Caco-2 (cell line): ENCODE measurements at regions of chr9 and their contacts with region 1.

Region 1: GRCh38 chr9:33737811-33738606 is 57.4 kb upstream of the PRSS3 start:
- DNase-seq: peak; percentile 68 to 72
- H3K4me3 ChIP-seq: no peak overlapping the region
- H3K4me3 Mint-ChIP-seq: no peak overlapping the region
- H3K27ac Mint-ChIP-seq: no peak overlapping the region
- H3K4me1 ChIP-seq: no peaks in the 10 kb centered on the region
- H3K4me1 Mint-ChIP-seq: peaks cover 13% of the 10 kb centered on the region
- H3K27me3 ChIP-seq: no peaks in the 10 kb centered on the region
- H3K27me3 Mint-ChIP-seq: no peaks in the 10 kb centered on the region
- CTCF ChIP-seq: peak; percentile 75 to 84

Region 2: GRCh38 chr9:33623658-33624586 is 114.1 kb before region 1 on chr9:
- CTCF ChIA-PET with region 1: interaction called, 10 read pairs
- POLR2A ChIA-PET with region 1: no interaction called
- intact Hi-C with region 1: no loop called
- DNase-seq: peak; percentile 71 to 84
- H3K4me3 ChIP-seq: no peak overlapping the region
- H3K4me3 Mint-ChIP-seq: no peak overlapping the region
- H3K27ac Mint-ChIP-seq: no peak overlapping the region
- H3K4me1 ChIP-seq: no peaks in the 10 kb centered on the region
- H3K4me1 Mint-ChIP-seq: peaks cover 13% of the 10 kb centered on the region
- H3K27me3 ChIP-seq: no peaks in the 10 kb centered on the region; the same call in 1 of the 2 replicates
- H3K27me3 Mint-ChIP-seq: peaks cover 8% of the 10 kb centered on the region
- CTCF ChIP-seq: peak; percentile 82 to 89

Region 3: GRCh38 chr9:33750307-33750838 is 12.4 kb after region 1 on chr9:
- CTCF ChIA-PET with region 1: interaction called, 13 read pairs
- POLR2A ChIA-PET with region 1: no interaction called
- intact Hi-C with region 1: loop called (anchors 1 kb)
- DNase-seq: peak; percentile 17 to 42
- H3K4me3 ChIP-seq: peak overlapping the region; percentile 91
- H3K4me3 Mint-ChIP-seq: peak overlapping the region; percentile 74
- H3K27ac Mint-ChIP-seq: peak overlapping the region; percentile 53
- H3K4me1 ChIP-seq: peaks cover 7% of the 10 kb centered on the region; the same call in 1 of the 2 replicates
- H3K4me1 Mint-ChIP-seq: peaks cover 17% of the 10 kb centered on the region
- H3K27me3 ChIP-seq: no peaks in the 10 kb centered on the region
- H3K27me3 Mint-ChIP-seq: no peaks in the 10 kb centered on the region
- CTCF ChIP-seq: no peak

Region 4: GRCh38 chr9:33778700-33779351 is 40.8 kb after region 1 on chr9:
- CTCF ChIA-PET with region 1: interaction called, 56 read pairs
- POLR2A ChIA-PET with region 1: no interaction called
- intact Hi-C with region 1: loop called (anchors 1 kb)
- DNase-seq: peak; percentile 63 to 73
- H3K4me3 ChIP-seq: no peak overlapping the region
- H3K4me3 Mint-ChIP-seq: no peak overlapping the region
- H3K27ac Mint-ChIP-seq: no peak overlapping the region
- H3K4me1 ChIP-seq: no peaks in the 10 kb centered on the region
- H3K4me1 Mint-ChIP-seq: peaks cover 7% of the 10 kb centered on the region
- H3K27me3 ChIP-seq: no peaks in the 10 kb centered on the region
- H3K27me3 Mint-ChIP-seq: no peaks in the 10 kb centered on the region
- CTCF ChIP-seq: peak; percentile 85 to 86

Region 5: DNA sequence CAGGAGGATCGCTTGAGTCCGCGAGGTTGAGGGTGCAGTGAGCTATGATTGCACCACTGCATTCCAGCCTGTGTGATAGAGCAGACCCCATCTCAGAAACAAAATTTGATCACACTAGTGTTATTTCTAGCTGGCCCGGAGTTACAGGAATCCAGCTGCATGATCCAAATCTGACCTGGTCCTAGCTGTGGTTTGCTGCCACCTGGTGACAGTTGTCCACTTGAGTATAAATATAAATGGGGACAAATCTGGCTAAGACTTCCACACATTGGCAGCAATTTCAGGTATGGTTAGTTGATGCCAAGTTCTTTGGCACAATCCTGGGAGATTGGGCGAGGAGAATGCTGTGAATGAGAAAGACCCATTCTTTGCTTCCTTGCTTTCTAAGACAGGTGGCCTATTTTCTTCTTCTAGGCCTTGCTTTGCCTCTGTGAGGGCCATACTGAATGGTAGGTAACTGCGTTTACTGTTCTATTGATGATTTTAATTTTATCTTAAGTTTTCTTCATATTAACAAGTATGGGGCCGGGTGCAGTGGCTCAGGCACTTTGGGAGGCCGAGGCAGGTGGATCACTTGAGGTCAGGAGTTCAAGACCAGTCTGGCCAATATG is 114.3 kb after region 1 on chr9:
- CTCF ChIA-PET with region 1: interaction called, 11 read pairs
- POLR2A ChIA-PET with region 1: no interaction called
- intact Hi-C with region 1: loop called (anchors 1 kb)
- DNase-seq: peak; percentile 65 to 73
- H3K4me3 ChIP-seq: no peak overlapping the region
- H3K4me3 Mint-ChIP-seq: no peak overlapping the region
- H3K27ac Mint-ChIP-seq: no peak overlapping the region
- H3K4me1 ChIP-seq: peaks cover 2% of the 10 kb centered on the region; the same call in 1 of the 2 replicates
- H3K4me1 Mint-ChIP-seq: peaks cover 23% of the 10 kb centered on the region
- H3K27me3 ChIP-seq: no peaks in the 10 kb centered on the region
- H3K27me3 Mint-ChIP-seq: no peaks in the 10 kb centered on the region
- CTCF ChIP-seq: peak; percentile 60 to 69